Activated CD4-positive, alpha-beta memory T cell treated with anti-CD3 and anti-CD28 coated beads for 36 hours (primary cell): ENCODE measurements at regions of chr1 and their contacts with region 1.

Region 1: DNA sequence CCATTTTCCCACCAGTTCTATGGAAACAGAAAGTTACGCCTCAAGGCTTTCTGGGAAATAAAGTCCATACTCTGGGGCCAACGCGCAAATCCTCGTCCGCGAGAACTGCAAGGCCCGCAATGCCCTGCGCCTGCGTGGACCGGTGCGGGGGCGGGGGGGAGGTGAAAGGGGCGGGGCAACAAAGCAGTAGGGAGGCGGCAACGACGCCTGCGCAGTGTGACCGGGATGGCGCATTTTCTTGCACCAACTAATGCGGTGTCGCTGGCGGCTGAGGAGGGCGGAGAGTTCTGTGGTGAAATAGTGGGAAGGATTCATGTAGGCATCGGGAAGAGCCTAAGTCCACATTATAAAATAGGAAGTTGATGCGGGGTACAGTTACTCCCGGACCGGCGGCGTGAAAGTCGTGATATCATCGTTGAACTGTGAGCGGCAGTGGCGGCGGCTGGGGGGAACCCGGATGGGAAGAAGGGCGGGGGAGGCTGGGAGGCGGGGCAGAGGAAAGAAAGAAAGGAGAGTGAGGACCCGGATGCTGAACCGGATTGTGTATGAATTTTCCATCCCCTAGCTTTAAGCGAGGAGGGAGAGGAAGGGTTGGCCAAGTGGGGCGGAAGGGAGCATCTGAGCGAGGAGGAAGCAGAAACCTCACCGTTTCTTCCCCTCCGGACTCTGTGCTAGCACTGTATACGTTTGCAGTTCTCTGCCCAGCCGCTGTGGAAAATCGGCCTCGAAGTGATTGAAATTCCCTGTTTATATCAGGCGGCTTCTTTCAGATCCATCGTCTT is at the start of gene GGPS1:
- DNase-seq: peak; percentile 100
- H3K4me3 Mint-ChIP-seq: no peak within 1 kb of the TSS
- H3K27ac Mint-ChIP-seq: no peak within 1 kb of the TSS
- H3K4me1 Mint-ChIP-seq: peaks cover 42% of the 10 kb centered on the region
- H3K27me3 Mint-ChIP-seq: no peaks in the 10 kb centered on the region
- total RNA-seq, gene GGPS1: 36.1 to 37.5 TPM

Region 2: GRCh38 chr1:234486498-234487448 is 841.8 kb before region 1 on chr1:
- CTCF ChIA-PET with region 1: no interaction called
- POLR2A ChIA-PET with region 1: no interaction called
- intact Hi-C with region 1: loop called (anchors 1 kb)
- DNase-seq: peak; percentile 55
- H3K4me3 Mint-ChIP-seq: no peak overlapping the region
- H3K27ac Mint-ChIP-seq: peak overlapping the region; percentile 81
- H3K4me1 Mint-ChIP-seq: peaks cover 36% of the 10 kb centered on the region
- H3K27me3 Mint-ChIP-seq: peaks cover 16% of the 10 kb centered on the region

Region 3: GRCh38 chr1:235050911-235051360 is 277.6 kb before region 1 on chr1:
- CTCF ChIA-PET with region 1: no interaction called
- POLR2A ChIA-PET with region 1: no interaction called
- intact Hi-C with region 1: loop called (anchors 1 kb)
- DNase-seq: peak; percentile 76
- H3K4me3 Mint-ChIP-seq: no peak overlapping the region
- H3K27ac Mint-ChIP-seq: peak overlapping the region; percentile 74
- H3K4me1 Mint-ChIP-seq: peaks cover 51% of the 10 kb centered on the region
- H3K27me3 Mint-ChIP-seq: no peaks in the 10 kb centered on the region

Region 4: DNA sequence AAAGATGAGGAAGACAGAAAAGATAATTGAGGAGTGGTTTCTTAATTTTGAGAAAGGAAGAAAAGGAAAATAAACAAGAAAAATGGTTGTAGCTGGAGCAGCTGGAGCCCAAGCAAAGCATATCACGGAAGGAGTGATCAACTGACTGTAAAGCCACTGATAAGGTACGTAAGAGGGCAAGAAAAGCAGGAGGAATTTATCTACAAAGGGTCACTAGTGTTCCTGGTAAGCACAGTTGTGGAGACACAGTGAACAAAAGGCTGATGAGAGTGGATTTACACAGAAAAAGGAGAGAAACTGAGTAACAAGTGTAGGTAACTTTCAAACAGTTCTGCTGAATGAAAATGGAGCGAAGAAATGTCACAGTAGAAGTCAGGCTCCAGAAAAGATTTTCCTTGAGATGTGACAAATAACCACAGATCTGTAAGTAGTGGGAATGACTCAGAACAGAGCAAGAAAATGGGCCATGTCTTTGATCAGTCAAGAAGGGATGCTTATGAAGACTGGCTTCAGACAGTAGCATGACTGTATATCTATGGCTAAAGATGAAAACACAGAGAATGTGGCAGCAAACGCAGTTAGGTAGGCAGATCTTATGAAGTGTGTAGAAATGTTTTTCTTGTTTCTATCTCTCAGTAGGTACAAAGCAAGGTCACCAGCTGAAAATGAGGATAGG is 121.9 kb before region 1 on chr1:
- CTCF ChIA-PET with region 1: no interaction called
- POLR2A ChIA-PET with region 1: no interaction called
- intact Hi-C with region 1: loop called (anchors 1 kb)
- DNase-seq: no peak
- H3K4me3 Mint-ChIP-seq: no peak overlapping the region
- H3K27ac Mint-ChIP-seq: peak overlapping the region; percentile 89
- H3K4me1 Mint-ChIP-seq: peaks cover 30% of the 10 kb centered on the region
- H3K27me3 Mint-ChIP-seq: no peaks in the 10 kb centered on the region

Region 5: DNA sequence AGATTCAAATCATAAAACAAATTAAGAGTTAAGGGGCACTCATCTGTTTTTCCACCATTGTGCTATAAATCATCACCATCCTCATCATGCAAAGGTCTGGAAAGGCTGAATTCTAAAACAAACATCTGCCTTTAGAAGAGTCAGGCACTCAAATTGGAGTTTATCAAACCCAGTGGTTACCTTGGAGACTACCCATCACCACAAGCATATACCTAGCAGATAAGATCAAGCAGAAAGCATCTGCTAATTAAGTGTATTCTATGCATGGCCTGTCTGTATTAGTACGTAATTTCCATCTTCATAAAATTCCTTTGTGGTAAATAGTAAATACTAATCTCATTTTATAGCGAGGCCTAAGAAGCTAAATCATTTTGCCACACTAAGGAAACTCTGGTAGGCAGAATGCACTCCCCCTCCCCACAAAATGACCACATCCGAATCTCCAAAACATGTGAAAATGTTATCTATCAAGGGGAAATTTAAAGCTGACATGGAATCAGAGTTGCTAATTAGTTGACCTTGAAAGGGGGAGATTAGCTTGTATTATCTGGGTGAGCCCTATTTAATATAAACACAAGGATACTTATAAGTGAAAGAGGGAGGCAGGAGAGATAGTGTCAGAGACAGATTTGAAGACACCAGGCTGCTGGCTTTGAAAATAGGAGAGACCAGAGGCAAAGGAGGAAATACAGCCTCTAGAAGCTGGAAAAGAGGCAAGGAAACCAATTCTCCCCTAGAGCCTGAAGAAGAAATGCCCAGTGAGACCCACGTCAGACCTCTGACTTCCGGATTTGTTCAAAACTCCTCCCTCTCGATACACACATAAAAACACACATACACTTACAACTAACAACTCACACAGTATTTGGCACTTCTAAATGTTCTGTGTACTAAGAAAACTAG is 23.7 kb before region 1 on chr1:
- CTCF ChIA-PET with region 1: no interaction called
- POLR2A ChIA-PET with region 1: interaction called, 3 read pairs
- intact Hi-C with region 1: loop called (anchors 2 kb)
- DNase-seq: peak; percentile 36
- H3K4me3 Mint-ChIP-seq: peak overlapping the region; percentile 49
- H3K27ac Mint-ChIP-seq: peak overlapping the region; percentile 87
- H3K4me1 Mint-ChIP-seq: peaks cover 51% of the 10 kb centered on the region
- H3K27me3 Mint-ChIP-seq: no peaks in the 10 kb centered on the region

Region 6: GRCh38 chr1:235473806-235474205 is 145.3 kb after region 1 on chr1:
- CTCF ChIA-PET with region 1: no interaction called
- POLR2A ChIA-PET with region 1: no interaction called
- intact Hi-C with region 1: no loop called
- DNase-seq: no peak
- H3K4me3 Mint-ChIP-seq: no peak overlapping the region
- H3K27ac Mint-ChIP-seq: no peak overlapping the region
- H3K4me1 Mint-ChIP-seq: peaks cover 6% of the 10 kb centered on the region
- H3K27me3 Mint-ChIP-seq: no peaks in the 10 kb centered on the region

Region 7: GRCh38 chr1:235504496-235505222 is 176.1 kb after region 1 on chr1:
- CTCF ChIA-PET with region 1: interaction called, 3 read pairs
- POLR2A ChIA-PET with region 1: no interaction called
- intact Hi-C with region 1: loop called (anchors 1 kb)
- DNase-seq: peak; percentile 99
- H3K4me3 Mint-ChIP-seq: peak overlapping the region; percentile 86
- H3K27ac Mint-ChIP-seq: peak overlapping the region; percentile 95
- H3K4me1 Mint-ChIP-seq: peaks cover 32% of the 10 kb centered on the region
- H3K27me3 Mint-ChIP-seq: no peaks in the 10 kb centered on the region